ENCODE measurements at regions of chr11 and their contacts with region 1.

Region 1: GRCh38 chr11:59918987-59919589 is 19.1 kb upstream of the OOSP1 start:
- DNase-seq: peak in 1 of 3 donors; percentile 75
- ATAC-seq: peak; percentile 66
- H3K4me3 ChIP-seq: no peak overlapping the region
- H3K4me1 ChIP-seq: no peaks in the 10 kb centered on the region
- CTCF ChIP-seq: peak; percentile 23

Region 2: GRCh38 chr11:58259985-58260384 is 1659.1 kb before region 1 on chr11:
- intact Hi-C with region 1: no loop called
- DNase-seq: no peak
- ATAC-seq: no peak
- H3K4me3 ChIP-seq: no peak overlapping the region
- H3K4me1 ChIP-seq: no peaks in the 10 kb centered on the region
- CTCF ChIP-seq: no peak

Region 3: DNA sequence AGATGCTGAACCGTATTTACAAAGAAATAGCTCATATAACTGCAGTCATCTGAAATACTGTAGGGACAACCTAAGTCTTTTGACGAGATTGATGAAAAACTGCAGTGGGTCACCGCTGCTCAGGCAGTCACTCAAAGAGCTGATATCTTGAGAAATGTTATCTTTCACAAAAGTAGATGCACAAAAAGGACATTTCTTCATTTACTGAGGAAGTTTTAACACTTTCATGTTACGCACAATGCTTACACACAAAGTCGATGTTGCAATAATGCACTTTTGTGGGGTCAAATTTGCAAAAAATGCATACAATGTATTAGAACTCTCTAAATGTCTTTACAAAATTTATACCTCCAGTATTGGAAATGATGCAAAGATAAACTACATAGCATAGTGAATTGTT is 189.3 kb before region 1 on chr11:
- intact Hi-C with region 1: loop called in 1 of 2 experiments (anchors 10 kb)
- DNase-seq: no peak
- ATAC-seq: no peak
- H3K4me3 ChIP-seq: no peak overlapping the region
- H3K4me1 ChIP-seq: no peaks in the 10 kb centered on the region
- CTCF ChIP-seq: no peak

Region 4: DNA sequence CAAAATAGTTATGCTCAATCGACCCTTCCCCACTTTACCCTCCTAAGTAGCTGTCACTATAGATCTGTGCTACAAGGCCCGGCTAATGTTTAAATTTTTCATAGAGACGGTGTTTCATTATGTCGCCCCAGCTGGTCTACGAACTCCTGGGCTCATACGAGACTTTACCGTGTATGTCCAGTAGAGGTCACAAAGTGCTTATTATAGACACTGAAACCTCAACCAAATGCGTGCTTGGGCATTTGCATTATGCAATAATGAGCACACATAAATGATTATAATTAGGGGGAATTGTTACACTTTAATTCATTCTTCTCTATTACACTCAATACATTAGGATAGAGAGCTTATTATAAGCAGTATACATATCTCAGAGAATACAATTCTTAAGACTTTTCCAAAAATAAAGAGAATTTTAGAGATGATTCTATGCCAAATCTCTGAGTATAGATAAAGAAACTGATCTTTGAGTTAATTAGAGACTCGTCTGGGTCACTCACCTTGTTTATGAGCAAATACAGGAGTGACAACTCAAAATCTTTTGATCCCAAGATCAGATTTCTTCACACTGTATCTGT is 96.0 kb before region 1 on chr11:
- intact Hi-C with region 1: loop called in 1 of 2 experiments (anchors 10 kb)
- DNase-seq: peak in 1 of 3 donors; percentile 78
- ATAC-seq: peak; percentile 89
- H3K4me3 ChIP-seq: no peak overlapping the region
- H3K4me1 ChIP-seq: no peaks in the 10 kb centered on the region
- CTCF ChIP-seq: peak; percentile 30

Region 5: GRCh38 chr11:59973097-59973496 is 54.0 kb after region 1 on chr11:
- intact Hi-C with region 1: no loop called
- DNase-seq: no peak
- ATAC-seq: no peak
- H3K4me3 ChIP-seq: no peak overlapping the region
- H3K4me1 ChIP-seq: no peaks in the 10 kb centered on the region
- CTCF ChIP-seq: no peak

Region 6: GRCh38 chr11:60169264-60169915 is 250.3 kb after region 1 on chr11:
- intact Hi-C with region 1: no loop called
- DNase-seq: peak in 1 of 3 donors; percentile 80
- ATAC-seq: peak; percentile 74
- H3K4me3 ChIP-seq: no peak overlapping the region
- H3K4me1 ChIP-seq: no peaks in the 10 kb centered on the region
- CTCF ChIP-seq: no peak

Measured in mucosa of descending colon (tissue), 3 donors.